Heart right ventricle (tissue), 16 donors: ENCODE measurements at regions of chr20 and their contacts with region 1.

Region 1: GRCh38 chr20:41317536-41318270 is at the start of gene ZHX3:
- DNase-seq: peak; percentile 97 to 99
- ATAC-seq: peak; percentile 97 to 99 (median 98)
- H3K4me3 ChIP-seq: peak within 1 kb of the TSS; percentile 53 to 90 (median 84)
- H3K27ac ChIP-seq: peak within 1 kb of the TSS; percentile 75 to 96 (median 92)
- H3K4me1 ChIP-seq: peaks cover 3 to 50% (median 41%) of the 10 kb centered on the region in 9 donors
- H3K27me3 ChIP-seq: no peaks in the 10 kb centered on the region
- CTCF ChIP-seq: peak in 1 of 9 donors; percentile 9
- total RNA-seq, gene ZHX3: 26.2 to 51.8 (median 31.0) TPM

Region 2: GRCh38 chr20:41232973-41233926 is 84.5 kb before region 1 on chr20:
- intact Hi-C with region 1: loop called in 1 of 10 experiments (anchors 5 kb)
- DNase-seq: no peak
- ATAC-seq: peak; percentile 32 to 70 (median 55)
- H3K4me3 ChIP-seq: peak overlapping the region in 2 of 10 donors; percentile 26 to 34
- H3K27ac ChIP-seq: peak overlapping the region; percentile 63 to 88 (median 82)
- H3K4me1 ChIP-seq: peaks cover 24 to 74% (median 69%) of the 10 kb centered on the region in 9 donors
- H3K27me3 ChIP-seq: no peaks in the 10 kb centered on the region
- CTCF ChIP-seq: no peak

Region 3: DNA sequence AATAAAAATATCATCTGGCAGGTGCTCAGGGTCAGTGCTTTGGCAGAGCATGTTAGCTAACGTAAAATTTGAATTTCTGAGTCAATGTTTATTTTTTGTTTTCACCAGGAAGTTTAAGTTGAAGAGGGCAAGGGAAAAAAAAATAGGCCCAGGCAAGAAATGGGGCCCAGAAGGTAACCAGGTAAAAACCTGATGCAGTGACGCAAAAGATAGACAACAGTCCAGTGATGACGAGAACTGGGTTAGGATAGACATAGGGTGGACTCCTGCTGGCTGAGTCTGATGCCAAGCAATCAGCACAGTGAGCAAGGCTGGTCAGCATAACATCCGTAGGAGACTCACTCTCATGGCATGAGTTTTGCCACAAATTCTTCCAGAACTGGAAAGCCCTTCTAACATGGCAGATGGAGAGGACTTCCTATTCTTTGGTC is 42.4 kb before region 1 on chr20:
- intact Hi-C with region 1: loop called in 2 of 10 experiments (anchors 5 kb)
- DNase-seq: no peak
- ATAC-seq: no peak
- H3K4me3 ChIP-seq: no peak overlapping the region
- H3K27ac ChIP-seq: peak overlapping the region in 6 of 10 donors; percentile 34 to 85 (median 74)
- H3K4me1 ChIP-seq: peaks cover 0 to 77% (median 46%) of the 10 kb centered on the region in 9 donors
- H3K27me3 ChIP-seq: no peaks in the 10 kb centered on the region
- CTCF ChIP-seq: no peak

Region 4: DNA sequence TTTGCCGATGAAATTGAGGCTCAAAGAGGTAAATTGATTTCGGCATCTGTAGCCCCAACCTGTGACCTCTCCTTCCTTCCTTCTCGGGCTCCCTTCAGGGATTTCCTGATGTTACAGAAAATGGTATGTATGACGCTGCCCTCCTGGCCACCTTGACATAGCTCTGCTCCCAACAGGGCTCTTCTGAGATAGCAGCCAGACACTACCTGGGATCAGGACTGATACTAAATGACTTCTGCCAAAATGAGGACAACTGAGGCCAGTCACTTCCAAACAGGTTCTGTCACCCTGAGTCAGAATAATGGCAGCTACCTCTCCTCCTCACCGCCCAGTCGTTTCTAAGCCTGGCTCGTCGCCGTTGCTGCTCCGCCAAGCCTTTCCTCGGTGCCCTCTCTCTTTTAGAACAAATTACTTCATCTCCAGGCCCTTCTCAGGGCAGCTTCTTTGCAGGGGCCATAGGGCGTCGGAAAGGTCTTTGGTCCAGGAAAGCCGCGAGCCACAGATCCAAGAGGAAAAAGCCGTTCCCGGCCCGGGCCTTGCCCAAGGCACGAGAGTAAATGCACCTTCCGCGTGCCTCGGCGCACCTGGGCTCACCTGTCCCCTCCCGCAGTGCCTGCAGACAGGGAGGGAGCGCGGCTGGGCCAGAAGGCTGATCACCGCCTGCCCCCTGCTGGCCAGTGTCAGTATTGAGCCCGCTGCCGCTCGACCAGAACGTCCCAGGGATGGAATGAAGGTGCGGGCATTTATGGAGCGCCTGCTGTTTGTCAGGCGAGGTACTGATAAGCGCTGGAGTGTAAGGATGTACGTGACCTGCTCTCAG is 22.0 kb after region 1 on chr20:
- intact Hi-C with region 1: no loop called
- DNase-seq: peak; percentile 85 to 86
- ATAC-seq: peak; percentile 69 to 89 (median 84)
- H3K4me3 ChIP-seq: peak overlapping the region in 9 of 10 donors; percentile 36 to 67 (median 59)
- H3K27ac ChIP-seq: peak overlapping the region; percentile 40 to 86 (median 80)
- H3K4me1 ChIP-seq: peaks cover 3 to 48% (median 25%) of the 10 kb centered on the region in 9 donors
- H3K27me3 ChIP-seq: peaks cover 0 to 11% (median 0%) of the 10 kb centered on the region in 7 donors
- CTCF ChIP-seq: peak; percentile 98 to 100 (median 99)

Region 5: DNA sequence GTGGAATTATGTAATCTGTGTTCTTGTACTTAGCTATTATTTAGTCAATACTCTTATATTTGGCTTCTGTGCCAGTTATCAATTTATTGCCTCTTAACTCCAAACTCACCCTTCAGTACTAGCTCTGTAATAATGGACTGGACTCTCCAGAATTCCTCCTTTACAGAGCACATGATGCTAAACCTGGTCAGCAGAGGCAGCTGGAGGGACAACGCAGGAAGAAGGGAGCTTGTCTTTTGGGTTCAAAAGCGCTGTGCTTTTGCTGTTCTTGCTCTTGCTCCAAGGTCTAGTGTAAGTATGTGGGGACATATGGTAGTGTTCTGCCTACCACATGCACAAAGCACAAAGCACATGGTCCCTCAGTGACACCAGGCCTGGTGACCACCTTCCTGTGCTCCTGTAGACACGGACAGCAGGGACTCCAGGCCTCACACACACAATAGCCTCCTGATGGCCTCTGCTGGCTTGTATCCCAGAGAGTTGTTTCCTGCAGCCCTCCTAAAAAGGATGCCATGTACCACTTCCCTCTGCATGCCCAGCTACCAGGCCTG is 254.4 kb after region 1 on chr20:
- intact Hi-C with region 1: no loop called
- DNase-seq: no peak
- ATAC-seq: peak in 4 of 8 donors; percentile 16 to 39 (median 34)
- H3K4me3 ChIP-seq: no peak overlapping the region
- H3K27ac ChIP-seq: no peak overlapping the region
- H3K4me1 ChIP-seq: peaks cover 10 to 98% (median 72%) of the 10 kb centered on the region in 9 donors
- H3K27me3 ChIP-seq: no peaks in the 10 kb centered on the region
- CTCF ChIP-seq: peak in 2 of 9 donors; percentile 14 to 28